GM10248 (cell line): ENCODE measurements at regions of chr20 and their contacts with region 1.

Region 1: GRCh38 chr20:11281240-11281639 is 607.4 kb upstream of the JAG1 start:
- DNase-seq: no peak
- CTCF ChIP-seq: no peak

Region 2: GRCh38 chr20:11235058-11235457 is 46.2 kb before region 1 on chr20:
- CTCF ChIA-PET with region 1: no interaction called
- POLR2A ChIA-PET with region 1: no interaction called
- DNase-seq: no peak
- CTCF ChIP-seq: no peak

Region 3: GRCh38 chr20:11248687-11249194 is 32.5 kb before region 1 on chr20:
- CTCF ChIA-PET with region 1: no interaction called
- POLR2A ChIA-PET with region 1: no interaction called
- DNase-seq: no peak
- CTCF ChIP-seq: no peak

Region 4: GRCh38 chr20:11296221-11296620 is 15.0 kb after region 1 on chr20:
- CTCF ChIA-PET with region 1: interaction called, 15 read pairs
- POLR2A ChIA-PET with region 1: no interaction called
- DNase-seq: no peak
- CTCF ChIP-seq: no peak